Panc1 (cell line): ENCODE measurements at regions of chr15 and their contacts with region 1.

Region 1: GRCh38 chr15:40108855-40109735 is at the start of gene BMF:
- DNase-seq: peak; percentile 96
- ATAC-seq: peak; percentile 93
- H3K4me3 ChIP-seq: peak within 1 kb of the TSS; percentile 73 to 86
- H3K27ac ChIP-seq: peak within 1 kb of the TSS; percentile 72
- H3K4me1 ChIP-seq: peaks cover 24% of the 10 kb centered on the region
- H3K27me3 ChIP-seq: no peaks in the 10 kb centered on the region
- CTCF ChIP-seq: no peak; the same call in 1 of the 2 replicates
- total RNA-seq, gene BMF: 7.8 TPM

Region 2: GRCh38 chr15:40038638-40039543 is 70.2 kb before region 1 on chr15 and contains the start of gene SRP14:
- CTCF ChIA-PET with region 1: interaction called, 3 read pairs
- POLR2A ChIA-PET with region 1: interaction called, 12 read pairs
- in situ Hi-C with region 1: no loop called
- intact Hi-C with region 1: loop called (anchors 2 kb)
- DNase-seq: peak; percentile 63
- ATAC-seq: peak; percentile 99
- H3K4me3 ChIP-seq: peak within 1 kb of the TSS; percentile 76 to 96
- H3K27ac ChIP-seq: peak within 1 kb of the TSS; percentile 99
- H3K4me1 ChIP-seq: peaks cover 6% of the 10 kb centered on the region
- H3K27me3 ChIP-seq: no peaks in the 10 kb centered on the region
- CTCF ChIP-seq: no peak
- total RNA-seq, gene SRP14: 166 TPM

Region 3: DNA sequence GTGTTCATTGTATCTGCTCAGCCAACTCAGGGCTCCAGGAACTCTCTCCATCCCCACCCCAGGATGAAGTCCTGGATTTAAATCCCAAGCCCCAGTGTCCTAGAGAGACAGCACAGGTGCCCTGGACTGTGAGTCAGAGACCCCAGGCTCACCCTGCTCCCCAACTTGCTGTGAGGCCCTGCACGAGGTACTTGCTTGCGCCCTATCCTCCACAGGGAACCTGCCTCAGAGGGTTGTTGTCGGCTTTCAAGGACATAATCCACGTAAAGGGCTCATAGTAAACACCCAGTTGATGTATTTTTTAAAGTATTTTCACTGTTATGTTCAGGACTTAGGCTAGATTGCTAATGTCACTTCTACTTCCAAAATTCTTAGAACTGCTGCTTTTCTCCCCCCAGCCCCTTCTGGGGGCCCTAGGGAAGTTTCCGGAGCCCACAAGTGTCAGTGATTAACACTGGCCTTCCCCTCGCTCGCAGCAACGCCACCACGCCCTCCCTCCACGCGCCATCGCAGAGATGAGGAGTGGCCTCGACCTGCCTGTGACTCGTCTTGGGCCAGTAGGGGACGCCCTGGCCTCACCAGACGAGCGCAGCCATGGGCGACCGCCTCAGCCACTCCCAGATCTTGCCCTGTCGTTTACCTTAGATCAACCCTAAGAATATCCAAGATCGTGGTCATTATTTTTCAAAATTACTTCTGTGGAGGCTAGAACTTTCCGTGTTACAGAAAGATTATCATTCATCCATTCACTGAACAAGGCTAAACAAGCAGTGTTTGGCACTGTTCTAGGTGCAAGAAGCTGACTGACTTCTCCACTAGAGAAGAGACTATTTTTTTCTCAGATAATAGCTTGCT is 64.2 kb before region 1 on chr15:
- CTCF ChIA-PET with region 1: interaction called, 9 read pairs
- POLR2A ChIA-PET with region 1: no interaction called
- in situ Hi-C with region 1: no loop called
- intact Hi-C with region 1: loop called (anchors 2 kb)
- DNase-seq: no peak
- ATAC-seq: peak; percentile 98
- H3K4me3 ChIP-seq: peak overlapping the region; percentile 20 to 58
- H3K27ac ChIP-seq: peak overlapping the region; percentile 53
- H3K4me1 ChIP-seq: peaks cover 35% of the 10 kb centered on the region
- H3K27me3 ChIP-seq: no peaks in the 10 kb centered on the region
- CTCF ChIP-seq: peak; percentile 99

Region 4: GRCh38 chr15:40160689-40161688 is 51.9 kb after region 1 on chr15 and contains the start of gene BUB1B:
- CTCF ChIA-PET with region 1: interaction called, 7 read pairs
- POLR2A ChIA-PET with region 1: no interaction called
- in situ Hi-C with region 1: no loop called
- intact Hi-C with region 1: loop called (anchors 5 kb)
- DNase-seq: peak; percentile 90
- ATAC-seq: peak; percentile 99
- H3K4me3 ChIP-seq: peak within 1 kb of the TSS; percentile 90 to 96
- H3K27ac ChIP-seq: peak within 1 kb of the TSS; percentile 88
- H3K4me1 ChIP-seq: peaks cover 25% of the 10 kb centered on the region
- H3K27me3 ChIP-seq: no peaks in the 10 kb centered on the region
- CTCF ChIP-seq: no peak
- total RNA-seq, gene BUB1B: 67.8 TPM